ENCODE measurements at regions of chr19 and their contacts with region 1.

Region 1: DNA sequence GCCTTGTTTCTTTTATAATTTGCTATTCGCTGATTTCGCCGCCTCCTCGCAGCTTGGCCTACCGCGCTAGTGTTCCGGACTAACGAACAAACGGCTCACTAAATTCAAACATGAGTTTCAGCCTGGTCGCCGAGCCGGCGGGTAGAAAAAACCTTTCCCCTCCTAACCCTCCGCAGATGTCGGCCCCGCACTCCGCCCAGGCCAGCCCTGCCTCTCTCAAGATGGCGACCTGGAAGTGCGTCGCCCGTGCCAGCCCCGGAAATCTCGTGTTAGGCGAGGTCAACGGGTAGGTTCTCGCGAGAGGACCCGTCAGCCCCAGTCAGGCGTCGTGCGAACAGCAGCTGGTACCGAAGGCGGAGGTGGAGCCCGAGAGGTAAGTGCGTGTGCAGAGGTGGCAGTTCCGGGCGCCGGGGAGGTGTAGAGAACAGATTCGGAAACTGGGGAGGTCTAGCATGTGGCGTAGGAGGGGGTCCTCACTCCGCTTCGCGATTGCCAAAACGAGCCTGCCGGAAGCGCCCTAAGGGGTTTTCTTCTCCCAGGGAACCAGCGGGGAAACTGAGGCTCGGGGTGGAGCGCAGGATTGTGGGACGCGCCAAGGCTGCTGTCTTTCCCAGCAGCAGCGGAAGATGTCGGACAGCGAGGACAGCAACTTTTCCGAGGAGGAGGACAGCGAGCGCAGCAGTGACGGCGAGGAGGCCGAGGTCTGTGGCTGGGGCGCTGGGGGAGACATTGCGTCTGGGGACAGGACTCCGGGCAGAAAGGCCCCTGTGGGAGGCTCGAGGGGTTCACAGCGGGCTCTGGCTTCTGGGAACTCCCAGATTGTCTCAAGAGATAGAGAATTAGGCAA is at the start of gene SUPT5H:
- DNase-seq: peak; percentile 88 to 97 (median 95)
- H3K4me3 ChIP-seq: peak within 1 kb of the TSS; percentile 58 to 100 (median 92)
- H3K27ac ChIP-seq: peak within 1 kb of the TSS; percentile 34 to 98 (median 93)
- H3K27me3 ChIP-seq: no peaks in the 10 kb centered on the region
- CTCF ChIP-seq: peak in 27 of 56 donors; percentile 12 to 55 (median 35)
- total RNA-seq, gene SUPT5H: 107 to 178 (median 128) TPM

Region 2: DNA sequence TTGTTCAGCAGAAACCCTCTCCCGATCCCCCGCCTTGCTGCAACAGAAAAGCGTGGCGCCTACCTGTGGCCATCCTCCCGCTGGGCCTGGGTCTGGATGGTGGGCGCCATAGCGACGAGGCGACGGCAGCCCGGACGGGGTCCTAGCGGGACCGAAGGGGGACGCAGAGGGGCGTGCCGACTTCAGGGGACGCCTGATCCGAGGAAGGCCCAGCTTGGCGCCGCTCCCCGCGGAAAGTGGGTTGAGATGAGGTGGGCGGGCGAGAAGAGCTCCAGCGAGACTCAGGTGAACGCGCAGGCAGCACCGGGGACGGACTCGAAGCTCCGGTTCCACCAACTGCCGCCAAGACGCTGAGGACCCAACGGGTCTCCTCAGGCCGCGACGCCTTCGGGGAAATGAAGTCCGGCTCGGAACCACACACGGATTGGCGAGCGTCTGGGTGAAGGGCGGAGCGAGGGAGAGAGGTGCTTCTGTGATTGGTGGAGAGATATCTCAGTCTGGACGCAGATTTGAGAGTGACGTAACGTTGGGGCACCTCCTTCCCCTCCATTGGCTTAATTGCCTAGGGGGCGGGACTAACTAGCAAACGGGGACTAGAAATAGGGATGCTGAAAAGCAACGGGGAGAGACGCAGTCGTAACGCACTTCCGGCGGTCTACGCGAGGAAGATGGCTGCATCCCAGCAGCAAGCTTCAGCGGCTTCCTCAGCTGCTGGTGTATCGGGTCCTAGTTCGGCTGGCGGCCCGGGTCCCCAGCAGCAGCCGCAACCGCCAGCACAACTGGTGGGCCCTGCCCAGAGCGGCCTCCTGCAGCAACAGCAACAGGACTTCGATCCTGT is 54.5 kb before region 1 on chr19 and contains the starts of genes MED29 and PAF1:
- intact Hi-C with region 1: loop called in 1 of 2 experiments (anchors 5 kb)
- DNase-seq: peak; percentile 88 to 99 (median 98)
- H3K4me3 ChIP-seq: peak within 1 kb of the TSS; percentile 77 to 100 (median 96)
- H3K27ac ChIP-seq: peak within 1 kb of the TSS; percentile 55 to 100 (median 97)
- H3K27me3 ChIP-seq: no peaks in the 10 kb centered on the region
- CTCF ChIP-seq: peak in 22 of 56 donors; percentile 2 to 52 (median 24)
- total RNA-seq, gene MED29: 41.8 to 99.7 (median 69.9) TPM
- total RNA-seq, gene PAF1: 33.5 to 65.7 (median 46.2) TPM

Region 3: DNA sequence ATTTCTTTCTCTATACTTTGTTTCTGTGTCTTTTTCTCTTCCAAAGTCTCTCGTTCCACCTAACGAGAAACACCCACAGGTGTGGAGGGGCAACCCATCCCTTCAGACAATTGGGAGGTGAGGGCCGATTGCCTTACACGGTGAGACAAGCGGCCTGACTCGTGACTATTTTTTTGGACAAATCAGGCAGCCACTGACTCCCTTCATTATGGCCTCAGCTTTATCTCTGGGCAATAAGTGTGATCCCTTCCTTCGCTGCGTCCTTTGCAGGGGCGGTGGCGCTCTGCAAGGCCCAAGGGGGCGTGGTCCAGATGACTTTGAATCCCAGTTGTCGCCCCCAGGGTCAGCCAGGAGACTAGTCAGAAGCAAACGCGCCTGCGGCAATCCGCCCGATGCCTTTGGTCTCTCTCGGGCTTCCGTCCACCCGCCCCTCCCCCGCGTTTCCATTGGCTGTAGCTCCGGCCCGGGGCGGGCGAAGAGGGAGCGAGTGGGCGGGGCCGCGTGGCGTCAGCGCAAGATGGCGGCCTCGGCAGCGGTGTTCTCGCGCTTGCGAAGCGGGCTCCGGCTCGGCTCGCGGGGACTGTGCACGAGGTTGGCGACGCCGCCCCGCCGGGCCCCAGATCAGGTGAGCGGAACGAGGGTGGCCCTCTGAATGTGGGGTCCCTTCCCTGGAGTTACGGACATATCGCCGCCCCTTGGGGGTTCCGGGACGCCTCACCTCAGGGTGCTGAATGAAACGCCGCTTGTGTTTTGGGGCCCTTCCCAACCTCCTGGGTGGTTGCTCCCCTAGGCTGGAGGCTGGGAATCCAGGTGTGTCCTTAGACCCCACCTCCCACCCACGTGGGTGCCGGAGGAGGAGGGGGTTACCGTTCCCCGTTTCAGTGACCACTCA is 35.1 kb after region 1 on chr19 and contains the start of gene TIMM50:
- intact Hi-C with region 1: loop called (anchors 2 kb)
- DNase-seq: peak; percentile 93 to 97 (median 96)
- H3K4me3 ChIP-seq: peak within 1 kb of the TSS; percentile 71 to 100 (median 97)
- H3K27ac ChIP-seq: peak within 1 kb of the TSS; percentile 2 to 95 (median 87)
- H3K27me3 ChIP-seq: no peaks in the 10 kb centered on the region
- CTCF ChIP-seq: peak in 44 of 56 donors; percentile 11 to 64 (median 38)
- total RNA-seq, gene TIMM50: 62.0 to 99.4 (median 80.0) TPM

Region 4: DNA sequence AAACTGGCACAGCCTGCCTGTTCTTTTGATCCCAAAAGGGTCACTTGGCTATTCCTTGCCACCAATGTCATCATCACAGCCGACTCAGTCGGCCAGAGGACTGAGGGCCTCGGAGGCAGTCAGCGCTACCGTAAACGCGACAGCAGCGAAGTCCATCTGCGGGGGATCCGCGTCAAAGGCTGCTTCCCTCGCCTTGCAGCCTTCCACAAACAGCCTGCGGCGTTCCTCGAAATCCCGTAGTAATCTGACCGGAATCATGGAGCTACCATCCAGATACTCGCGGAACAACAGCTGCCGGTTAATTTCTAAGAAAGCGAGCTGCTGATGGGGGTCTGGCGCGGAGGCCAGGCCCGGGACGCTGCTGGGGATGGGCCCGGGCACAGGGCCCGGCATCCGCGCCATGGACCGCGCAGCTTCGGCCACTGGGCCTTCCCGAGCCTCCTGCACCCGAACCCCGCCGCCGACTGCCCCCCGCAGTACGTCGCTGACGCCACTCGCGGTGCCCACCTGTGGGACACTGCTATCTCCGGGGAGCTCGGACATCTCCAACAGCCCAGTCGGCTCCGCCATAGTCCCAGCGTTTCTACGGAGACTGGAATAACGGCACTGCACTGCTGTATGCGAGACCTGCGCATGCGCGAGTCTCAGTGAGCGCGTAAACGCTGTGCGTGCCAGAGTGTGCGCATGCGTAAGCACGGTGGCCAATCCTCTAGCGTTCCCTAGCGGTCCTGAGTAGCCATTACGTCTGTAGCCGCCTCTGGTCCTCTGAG is 86.9 kb after region 1 on chr19 and contains the start of gene EID2B:
- intact Hi-C with region 1: loop called in 1 of 2 experiments (anchors 2 kb)
- DNase-seq: peak; percentile 88 to 95 (median 92)
- H3K4me3 ChIP-seq: peak within 1 kb of the TSS; percentile 51 to 100 (median 90)
- H3K27ac ChIP-seq: peak within 1 kb of the TSS in 57 of 59 donors; percentile 10 to 97 (median 89)
- H3K27me3 ChIP-seq: no peaks in the 10 kb centered on the region
- CTCF ChIP-seq: peak; percentile 98 to 100 (median 100)
- total RNA-seq, gene EID2B: 6.6 to 20.4 (median 12.6) TPM

Region 5: GRCh38 chr19:39539519-39540332 is 94.2 kb after region 1 on chr19 and contains the start of gene EID2:
- intact Hi-C with region 1: loop called in 1 of 2 experiments (anchors 2 kb)
- DNase-seq: peak; percentile 93 to 97 (median 94)
- H3K4me3 ChIP-seq: peak within 1 kb of the TSS; percentile 53 to 96 (median 83)
- H3K27ac ChIP-seq: peak within 1 kb of the TSS; percentile 75 to 99 (median 94)
- H3K27me3 ChIP-seq: no peaks in the 10 kb centered on the region
- CTCF ChIP-seq: peak; percentile 66 to 99 (median 96)
- total RNA-seq, gene EID2: 12.7 to 42.3 (median 28.5) TPM

Region 6: GRCh38 chr19:39599116-39599515 is 153.6 kb after region 1 on chr19:
- intact Hi-C with region 1: no loop called
- DNase-seq: no peak
- H3K4me3 ChIP-seq: no peak overlapping the region
- H3K27ac ChIP-seq: no peak overlapping the region
- H3K27me3 ChIP-seq: peaks cover 0 to 50% (median 11%) of the 10 kb centered on the region in 45 donors
- CTCF ChIP-seq: no peak

Region 7: DNA sequence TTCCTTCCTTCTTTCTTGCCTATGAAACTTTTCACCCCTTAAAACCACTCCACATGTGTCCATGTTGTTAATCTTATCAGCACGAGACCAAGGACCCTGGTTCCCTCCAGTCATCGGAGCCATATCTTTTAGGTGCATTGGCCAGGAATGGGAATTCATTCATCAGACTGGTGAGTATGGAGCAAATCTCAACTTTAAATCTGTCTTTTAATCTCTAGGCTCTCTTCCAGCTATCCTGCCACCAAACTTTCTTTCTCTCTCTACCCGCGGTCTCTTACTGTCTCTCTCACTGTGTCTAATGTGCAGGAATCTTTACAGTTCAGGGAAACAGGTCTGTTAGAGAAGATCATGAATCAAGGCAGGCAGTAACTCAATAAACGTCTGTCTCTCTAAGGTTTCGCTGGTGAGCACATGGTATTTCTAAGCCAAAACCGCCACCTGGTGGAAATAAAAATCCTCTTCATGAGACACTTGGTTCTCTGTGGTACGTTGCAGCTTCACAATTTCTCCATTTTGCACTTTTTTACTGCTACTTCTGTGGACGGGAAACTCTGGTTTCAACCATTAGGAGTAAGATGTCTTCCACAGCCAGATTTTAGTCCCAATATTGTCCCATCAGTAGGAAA is 226.4 kb after region 1 on chr19:
- intact Hi-C with region 1: loop called in 1 of 2 experiments (anchors 5 kb)
- DNase-seq: peak in 1 of 10 donors; percentile 18
- H3K4me3 ChIP-seq: no peak overlapping the region
- H3K27ac ChIP-seq: no peak overlapping the region
- H3K27me3 ChIP-seq: peaks cover 0 to 7% (median 0%) of the 10 kb centered on the region in 45 donors
- CTCF ChIP-seq: peak; percentile 35 to 82 (median 64)

Measured in dorsolateral prefrontal cortex (tissue), 120 donors.